ENCODE measurements at regions of chrX and their contacts with region 1.

Region 1: DNA sequence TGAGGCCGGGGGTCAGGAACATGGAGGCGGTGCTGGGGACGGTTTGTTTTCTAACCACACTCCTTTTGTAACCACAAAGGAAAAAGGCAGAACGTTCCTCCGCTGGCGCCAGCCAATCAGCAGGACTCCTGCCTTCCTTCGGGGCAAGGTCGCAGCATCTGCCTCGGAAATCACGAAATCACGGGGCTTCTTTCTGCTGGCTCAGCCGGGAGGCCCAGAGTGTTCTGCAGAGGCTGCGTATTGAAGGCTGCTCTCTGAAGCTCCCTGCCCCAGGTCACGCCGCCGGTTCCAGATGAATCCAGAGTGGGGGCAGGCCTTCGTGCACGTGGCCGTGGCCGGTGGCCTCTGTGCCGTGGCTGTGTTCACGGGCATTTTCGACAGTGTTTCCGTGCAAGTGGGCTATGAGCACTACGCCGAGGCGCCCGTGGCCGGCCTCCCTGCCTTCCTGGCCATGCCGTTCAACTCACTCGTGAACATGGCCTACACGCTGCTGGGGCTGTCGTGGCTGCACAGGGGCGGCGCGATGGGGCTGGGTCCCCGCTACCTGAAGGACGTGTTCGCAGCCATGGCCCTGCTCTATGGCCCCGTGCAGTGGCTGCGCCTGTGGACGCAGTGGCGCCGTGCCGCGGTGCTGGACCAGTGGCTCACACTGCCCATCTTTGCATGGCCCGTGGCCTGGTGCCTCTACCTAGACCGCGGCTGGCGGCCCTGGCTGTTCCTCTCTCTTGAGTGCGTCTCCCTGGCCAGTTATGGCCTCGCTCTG is 9.4 kb downstream of the TMEM187 start:
- DNase-seq: no peak
- H3K4me3 ChIP-seq: no peak overlapping the region
- H3K27ac ChIP-seq: peak overlapping the region; percentile 17 to 55
- H3K4me1 ChIP-seq: no peaks in the 10 kb centered on the region
- H3K27me3 ChIP-seq: peaks cover 0 to 36% of the 10 kb centered on the region in 2 donors
- CTCF ChIP-seq: no peak
- POLR2A ChIP-seq: no peak

Region 2: GRCh38 chrX:153963546-153963945 is 18.4 kb before region 1 on chrX:
- intact Hi-C with region 1: no loop called
- DNase-seq: no peak
- H3K4me3 ChIP-seq: no peak overlapping the region
- H3K27ac ChIP-seq: no peak overlapping the region
- H3K4me1 ChIP-seq: peaks cover 0 to 6% of the 10 kb centered on the region in 2 donors
- H3K27me3 ChIP-seq: peaks cover 0 to 36% of the 10 kb centered on the region in 2 donors
- CTCF ChIP-seq: no peak
- POLR2A ChIP-seq: no peak

Region 3: DNA sequence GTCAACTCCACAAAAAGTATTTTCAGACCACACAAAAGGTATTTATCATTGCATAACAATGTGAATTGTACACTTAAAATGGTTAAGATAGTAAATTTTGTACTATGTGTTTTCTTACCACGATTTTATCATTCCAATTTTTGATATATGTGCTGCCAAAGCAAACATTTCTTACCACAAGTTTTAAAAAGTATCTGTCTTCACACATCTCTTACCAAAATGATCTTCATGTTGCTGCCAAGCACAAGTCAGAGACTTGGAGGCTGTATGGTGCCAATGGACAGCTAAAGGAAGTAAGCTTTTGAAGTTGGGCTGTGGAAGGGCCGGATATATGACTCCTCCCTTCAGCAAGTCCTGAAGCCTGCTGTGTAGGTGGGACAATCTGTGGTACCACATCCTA is 1562.9 kb after region 1 on chrX:
- intact Hi-C with region 1: loop called (anchors 10 kb)
- DNase-seq: no peak
- H3K4me3 ChIP-seq: no peak overlapping the region
- H3K27ac ChIP-seq: no peak overlapping the region
- H3K4me1 ChIP-seq: no peaks in the 10 kb centered on the region
- H3K27me3 ChIP-seq: no peaks in the 10 kb centered on the region
- CTCF ChIP-seq: no peak
- POLR2A ChIP-seq: no peak

Measured in breast epithelium (tissue), 4 donors.